A673 (cell line): ENCODE measurements at regions of chr16 and their contacts with region 1.

Region 1: GRCh38 chr16:21023509-21024202 is 123.1 kb downstream of the LYRM1 start:
- DNase-seq: no peak
- H3K4me3 ChIP-seq: no peak overlapping the region
- H3K27ac ChIP-seq: no peak overlapping the region
- H3K4me1 ChIP-seq: no peaks in the 10 kb centered on the region
- H3K27me3 ChIP-seq: no peaks in the 10 kb centered on the region
- CTCF ChIP-seq: no peak

Region 2: DNA sequence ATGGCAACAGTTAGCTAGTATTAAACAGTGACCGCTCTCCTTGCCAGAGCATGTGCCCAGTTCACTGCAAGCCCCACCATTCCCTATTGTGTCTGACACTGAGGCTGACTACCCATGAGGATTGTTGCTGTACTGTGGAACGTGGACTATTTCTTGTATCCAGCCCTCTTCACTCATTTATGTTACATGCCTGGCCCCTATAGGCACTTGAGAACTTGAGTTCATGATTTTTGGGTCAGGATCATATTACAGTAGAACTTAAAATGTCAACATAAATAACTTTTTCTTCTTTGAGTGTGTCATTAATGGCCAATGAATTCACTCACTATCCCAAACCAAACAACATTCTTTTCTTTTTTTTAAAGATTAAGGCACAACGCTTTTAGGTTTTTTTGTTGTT is 67.3 kb before region 1 on chr16:
- CTCF ChIA-PET with region 1: no interaction called
- POLR2A ChIA-PET with region 1: no interaction called
- intact Hi-C with region 1: no loop called
- DNase-seq: no peak
- H3K4me3 ChIP-seq: no peak overlapping the region
- H3K27ac ChIP-seq: no peak overlapping the region
- H3K4me1 ChIP-seq: no peaks in the 10 kb centered on the region
- H3K27me3 ChIP-seq: no peaks in the 10 kb centered on the region
- CTCF ChIP-seq: no peak

Region 3: GRCh38 chr16:21033704-21034103 is 10.0 kb after region 1 on chr16:
- CTCF ChIA-PET with region 1: interaction called, 11 read pairs
- POLR2A ChIA-PET with region 1: no interaction called
- intact Hi-C with region 1: no loop called
- DNase-seq: peak; percentile 6
- H3K4me3 ChIP-seq: no peak overlapping the region
- H3K27ac ChIP-seq: no peak overlapping the region
- H3K4me1 ChIP-seq: no peaks in the 10 kb centered on the region
- H3K27me3 ChIP-seq: no peaks in the 10 kb centered on the region
- CTCF ChIP-seq: no peak

Region 4: GRCh38 chr16:21194771-21195301 is 171.2 kb after region 1 on chr16:
- CTCF ChIA-PET with region 1: no interaction called
- POLR2A ChIA-PET with region 1: no interaction called
- intact Hi-C with region 1: no loop called
- DNase-seq: no peak
- H3K4me3 ChIP-seq: no peak overlapping the region
- H3K27ac ChIP-seq: no peak overlapping the region
- H3K4me1 ChIP-seq: no peaks in the 10 kb centered on the region
- H3K27me3 ChIP-seq: peaks cover 34% of the 10 kb centered on the region
- CTCF ChIP-seq: no peak